Left lung (tissue), 14 donors: ENCODE measurements at regions of chr20 and their contacts with region 1.

Region 1: DNA sequence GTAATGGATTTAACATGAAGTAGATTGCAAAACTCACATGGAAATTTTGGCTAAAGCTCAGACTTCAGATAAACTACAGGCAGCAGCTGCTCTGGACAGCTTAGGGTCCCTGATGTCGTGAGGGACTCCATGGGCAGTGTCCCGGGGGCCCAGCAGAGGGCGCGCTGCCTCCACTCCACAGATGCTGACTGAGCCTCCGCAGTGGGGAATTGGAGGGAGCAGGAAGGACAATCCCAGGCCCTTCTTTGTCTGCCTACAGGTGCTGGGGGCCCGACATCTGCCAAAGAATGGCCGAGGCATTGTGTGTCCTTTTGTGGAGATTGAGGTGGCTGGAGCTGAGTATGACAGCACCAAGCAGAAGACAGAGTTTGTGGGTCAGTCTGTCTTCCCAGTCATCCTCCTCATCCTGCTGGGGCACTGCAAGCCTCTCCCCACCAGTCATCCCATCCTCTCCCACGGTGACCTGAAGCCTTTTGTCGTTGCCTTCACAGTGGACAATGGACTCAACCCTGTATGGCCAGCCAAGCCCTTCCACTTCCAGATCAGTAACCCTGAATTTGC is 35.9 kb downstream of the PLCG1 start:
- DNase-seq: peak; percentile 74 to 93 (median 90)
- ATAC-seq: peak; percentile 91
- H3K4me3 ChIP-seq: no peak overlapping the region
- H3K27ac ChIP-seq: peak overlapping the region; percentile 39 to 45
- H3K4me1 ChIP-seq: peaks cover 0 to 17% of the 10 kb centered on the region in 2 donors
- H3K27me3 ChIP-seq: no peaks in the 10 kb centered on the region
- CTCF ChIP-seq: peak; percentile 90 to 93

Region 2: DNA sequence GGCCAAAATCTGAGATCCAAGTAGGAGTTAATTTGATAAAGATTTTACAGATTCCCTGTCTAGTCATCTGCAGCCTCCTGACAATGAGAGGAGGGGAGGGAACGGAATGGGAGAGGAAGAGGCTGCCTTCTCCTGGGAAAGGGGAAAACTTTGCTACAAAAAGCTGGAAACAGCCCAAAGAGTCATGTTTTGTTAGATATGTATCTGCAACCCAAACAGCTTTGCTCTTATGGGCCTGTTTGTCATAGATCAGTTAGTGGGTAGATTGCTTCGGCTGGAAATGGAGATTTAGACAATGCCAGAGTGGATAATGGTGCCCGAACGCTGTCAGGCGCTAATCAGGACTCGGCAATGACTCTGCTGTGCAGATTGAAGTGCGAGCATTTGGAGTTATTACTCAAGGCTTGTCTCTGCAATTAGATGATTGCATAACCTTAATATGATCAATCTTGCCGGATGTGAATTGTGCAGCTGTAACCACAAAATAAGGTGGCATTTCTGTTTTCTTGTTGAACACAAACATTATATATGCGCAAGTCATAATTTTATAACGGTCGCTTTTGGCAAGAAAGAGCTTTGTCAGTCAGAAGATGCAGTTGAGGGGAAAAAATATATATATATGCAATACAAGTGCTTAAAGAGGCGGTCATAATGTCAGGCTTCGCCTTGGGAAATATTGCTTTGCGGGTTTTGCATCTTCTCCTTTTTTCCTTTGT is 391.8 kb before region 1 on chr20:
- intact Hi-C with region 1: no loop called
- DNase-seq: no peak
- ATAC-seq: no peak
- H3K4me3 ChIP-seq: no peak overlapping the region
- H3K27ac ChIP-seq: no peak overlapping the region
- H3K4me1 ChIP-seq: peaks cover 8 to 57% of the 10 kb centered on the region in 2 donors
- H3K27me3 ChIP-seq: peaks cover 0 to 8% of the 10 kb centered on the region in 2 donors
- CTCF ChIP-seq: no peak

Region 3: DNA sequence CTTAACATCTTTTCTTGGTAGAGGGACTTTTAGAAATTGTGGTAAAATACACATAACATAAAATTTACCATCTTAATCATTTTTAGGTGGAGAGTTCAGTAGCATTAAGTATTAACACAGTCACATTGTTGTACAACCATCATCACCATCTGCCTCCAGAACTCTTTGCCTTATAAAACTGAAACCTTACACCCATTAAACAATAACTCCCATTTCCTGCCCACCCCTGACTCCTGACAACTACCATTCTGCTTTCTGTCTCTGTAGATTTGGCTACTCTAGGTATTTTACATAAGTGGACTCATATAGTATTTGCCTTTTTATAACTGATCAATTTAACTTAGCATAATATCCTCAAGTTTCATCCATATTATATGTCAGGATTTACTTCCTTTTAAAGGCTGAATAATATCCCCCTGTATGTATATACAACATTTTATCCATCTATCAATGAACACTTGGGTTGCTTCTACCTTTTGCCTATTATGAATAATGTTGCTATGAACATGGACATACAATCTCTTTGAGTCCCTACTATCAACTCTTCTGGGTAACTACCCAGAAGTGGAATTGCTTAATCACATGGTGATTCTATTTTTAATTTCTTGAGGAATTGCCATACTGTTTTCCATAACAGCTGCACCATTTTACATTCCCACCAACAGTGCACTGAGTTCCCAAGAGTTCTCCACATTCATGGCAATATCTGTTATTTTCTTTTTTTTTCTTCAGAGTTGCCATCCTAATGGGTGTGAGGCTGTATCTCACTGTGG is 55.8 kb after region 1 on chr20:
- intact Hi-C with region 1: loop called in 1 of 2 experiments (anchors 10 kb)
- DNase-seq: no peak
- ATAC-seq: no peak
- H3K4me3 ChIP-seq: no peak overlapping the region
- H3K27ac ChIP-seq: no peak overlapping the region
- H3K4me1 ChIP-seq: peaks cover 7 to 24% of the 10 kb centered on the region in 2 donors
- H3K27me3 ChIP-seq: no peaks in the 10 kb centered on the region
- CTCF ChIP-seq: no peak

Region 4: DNA sequence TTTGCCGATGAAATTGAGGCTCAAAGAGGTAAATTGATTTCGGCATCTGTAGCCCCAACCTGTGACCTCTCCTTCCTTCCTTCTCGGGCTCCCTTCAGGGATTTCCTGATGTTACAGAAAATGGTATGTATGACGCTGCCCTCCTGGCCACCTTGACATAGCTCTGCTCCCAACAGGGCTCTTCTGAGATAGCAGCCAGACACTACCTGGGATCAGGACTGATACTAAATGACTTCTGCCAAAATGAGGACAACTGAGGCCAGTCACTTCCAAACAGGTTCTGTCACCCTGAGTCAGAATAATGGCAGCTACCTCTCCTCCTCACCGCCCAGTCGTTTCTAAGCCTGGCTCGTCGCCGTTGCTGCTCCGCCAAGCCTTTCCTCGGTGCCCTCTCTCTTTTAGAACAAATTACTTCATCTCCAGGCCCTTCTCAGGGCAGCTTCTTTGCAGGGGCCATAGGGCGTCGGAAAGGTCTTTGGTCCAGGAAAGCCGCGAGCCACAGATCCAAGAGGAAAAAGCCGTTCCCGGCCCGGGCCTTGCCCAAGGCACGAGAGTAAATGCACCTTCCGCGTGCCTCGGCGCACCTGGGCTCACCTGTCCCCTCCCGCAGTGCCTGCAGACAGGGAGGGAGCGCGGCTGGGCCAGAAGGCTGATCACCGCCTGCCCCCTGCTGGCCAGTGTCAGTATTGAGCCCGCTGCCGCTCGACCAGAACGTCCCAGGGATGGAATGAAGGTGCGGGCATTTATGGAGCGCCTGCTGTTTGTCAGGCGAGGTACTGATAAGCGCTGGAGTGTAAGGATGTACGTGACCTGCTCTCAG is 166.5 kb after region 1 on chr20:
- intact Hi-C with region 1: loop called in 1 of 2 experiments (anchors 2 kb)
- DNase-seq: peak; percentile 68 to 96 (median 86)
- ATAC-seq: peak; percentile 95
- H3K4me3 ChIP-seq: peak overlapping the region; percentile 33 to 36
- H3K27ac ChIP-seq: peak overlapping the region; percentile 24 to 80
- H3K4me1 ChIP-seq: peaks cover 0 to 14% of the 10 kb centered on the region in 2 donors
- H3K27me3 ChIP-seq: peaks cover 0 to 11% of the 10 kb centered on the region in 2 donors
- CTCF ChIP-seq: peak; percentile 98 to 99